PC-3 (cell line): ENCODE measurements at regions of chr19 and their contacts with region 1.

Region 1: GRCh38 chr19:54137086-54137921 is at the start of gene CNOT3:
- DNase-seq: peak; percentile 100
- ATAC-seq: peak; percentile 80
- H3K4me3 ChIP-seq: peak within 1 kb of the TSS; percentile 86
- H3K27ac ChIP-seq: peak within 1 kb of the TSS; percentile 79
- H3K4me1 ChIP-seq: peaks cover 20% of the 10 kb centered on the region; the same call in 1 of the 2 replicates
- H3K27me3 ChIP-seq: no peaks in the 10 kb centered on the region
- CTCF ChIP-seq: no peak
- total RNA-seq, gene CNOT3: 41.1 and 60.2 TPM in 2 replicates

Region 2: DNA sequence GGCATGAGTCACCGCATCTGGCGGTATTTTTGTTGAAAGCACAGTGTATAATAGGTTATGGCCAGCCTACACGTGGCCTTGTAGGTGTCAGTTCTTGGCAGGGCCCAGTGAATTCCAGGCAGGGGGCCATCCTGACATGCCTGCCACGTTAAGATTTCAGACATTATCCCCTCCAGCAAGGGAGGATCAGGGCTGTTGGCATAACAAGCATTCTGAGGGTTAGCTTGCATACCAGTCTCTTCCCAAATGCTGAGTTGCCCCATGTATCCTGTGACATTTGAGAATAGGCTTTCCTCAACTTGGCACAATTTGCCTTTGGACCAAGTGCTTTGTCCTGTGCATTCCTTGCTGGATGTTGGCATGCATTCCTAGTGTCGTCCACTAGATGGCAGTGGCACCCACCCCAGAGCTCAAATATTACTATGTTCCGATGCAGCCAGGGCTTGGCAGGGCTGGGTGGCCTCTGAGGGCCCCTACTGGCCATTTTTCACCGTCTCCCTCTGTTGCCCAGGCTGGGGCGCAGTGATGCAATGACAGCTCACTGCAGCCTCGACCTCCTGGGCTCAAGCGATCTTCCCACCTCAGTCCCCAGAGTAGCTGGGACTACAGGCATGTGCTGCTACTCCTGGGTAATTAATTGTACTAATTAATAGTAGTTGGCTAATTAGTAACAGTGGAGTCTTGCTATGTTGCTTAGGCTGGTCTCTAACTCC is 344.4 kb before region 1 on chr19:
- CTCF ChIA-PET with region 1: interaction called, 10 read pairs
- POLR2A ChIA-PET with region 1: no interaction called
- intact Hi-C with region 1: no loop called
- DNase-seq: peak; percentile 96
- ATAC-seq: peak; percentile 100
- H3K4me3 ChIP-seq: no peak overlapping the region
- H3K27ac ChIP-seq: no peak overlapping the region
- H3K4me1 ChIP-seq: no peaks in the 10 kb centered on the region
- H3K27me3 ChIP-seq: no peaks in the 10 kb centered on the region
- CTCF ChIP-seq: peak; percentile 99

Region 3: DNA sequence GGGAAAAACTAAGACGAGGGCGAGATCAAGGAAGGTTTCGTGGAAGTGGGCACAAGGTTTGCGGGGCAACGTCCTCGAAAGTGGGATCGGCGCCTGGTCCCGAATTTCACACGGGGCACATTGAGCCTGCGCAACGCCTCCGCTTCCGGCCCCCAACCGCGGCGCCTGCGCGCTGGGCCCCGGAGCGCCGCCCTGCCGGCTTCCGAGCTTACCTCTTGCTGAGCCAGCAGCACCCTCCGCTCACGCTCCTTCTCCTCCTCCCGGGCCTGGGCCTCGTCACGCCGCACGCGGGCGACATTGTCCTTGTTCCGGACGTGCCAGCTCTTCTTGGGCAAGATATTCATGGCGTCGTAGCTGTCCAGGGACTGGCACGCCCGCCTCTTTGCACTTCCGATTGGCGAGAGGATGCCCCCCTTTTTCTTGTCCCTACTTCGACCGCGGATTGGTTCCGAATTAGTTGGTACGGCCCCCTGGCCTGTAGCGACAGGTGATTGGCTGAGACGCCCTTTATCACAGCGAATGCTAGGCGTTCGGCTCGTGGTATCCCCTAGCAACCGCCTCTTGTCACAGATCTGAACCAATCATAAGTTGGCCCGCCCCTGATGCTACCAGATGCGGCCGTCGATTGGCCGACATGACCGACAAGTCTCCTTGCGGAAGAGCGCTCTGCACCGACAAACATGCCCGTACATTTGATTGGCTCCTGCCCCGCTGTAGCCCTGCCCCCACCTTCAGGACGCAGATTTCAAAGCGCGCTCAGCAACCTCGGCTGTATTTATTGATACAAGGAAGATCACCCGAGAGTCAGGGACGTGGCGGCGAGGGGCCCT is 22.3 kb after region 1 on chr19 and contains the start of gene LENG1:
- CTCF ChIA-PET with region 1: interaction called, 10 read pairs
- POLR2A ChIA-PET with region 1: interaction called, 5 read pairs
- intact Hi-C with region 1: loop called (anchors 1 kb)
- DNase-seq: peak; percentile 100
- ATAC-seq: peak; percentile 81
- H3K4me3 ChIP-seq: peak within 1 kb of the TSS; percentile 71
- H3K27ac ChIP-seq: peak within 1 kb of the TSS; percentile 72
- H3K4me1 ChIP-seq: peaks cover 38% of the 10 kb centered on the region
- H3K27me3 ChIP-seq: no peaks in the 10 kb centered on the region
- CTCF ChIP-seq: peak; percentile 34; the same call in 1 of the 2 replicates
- total RNA-seq, gene LENG1: 13.6 and 18.8 TPM in 2 replicates

Region 4: GRCh38 chr19:54189735-54190502 is 52.6 kb after region 1 on chr19:
- CTCF ChIA-PET with region 1: interaction called, 11 read pairs
- POLR2A ChIA-PET with region 1: interaction called, 22 read pairs
- intact Hi-C with region 1: loop called (anchors 1 kb)
- DNase-seq: peak; percentile 100
- ATAC-seq: peak; percentile 58
- H3K4me3 ChIP-seq: peak overlapping the region; percentile 74
- H3K27ac ChIP-seq: peak overlapping the region; percentile 89
- H3K4me1 ChIP-seq: peaks cover 19% of the 10 kb centered on the region
- H3K27me3 ChIP-seq: no peaks in the 10 kb centered on the region
- CTCF ChIP-seq: no peak

Region 5: DNA sequence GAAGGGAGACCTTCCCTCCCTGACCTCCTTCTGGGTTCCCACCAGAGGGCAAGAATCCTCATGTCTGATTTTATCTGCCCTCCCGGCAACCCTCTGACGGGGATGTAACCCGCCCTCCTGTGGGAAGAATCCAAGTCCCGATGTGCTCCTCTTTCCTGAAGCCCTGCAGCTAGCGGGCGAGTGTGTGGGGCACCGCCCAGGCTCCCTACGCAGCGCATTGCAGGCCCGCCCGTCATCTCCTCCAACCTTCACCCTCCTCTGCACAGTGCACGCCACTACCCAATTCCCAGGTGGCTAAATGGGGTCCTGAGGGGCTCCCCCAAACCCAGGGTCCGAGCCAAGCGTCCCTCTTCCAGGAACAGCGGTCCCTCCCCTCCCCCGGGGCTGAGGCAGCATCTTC is 220.1 kb after region 1 on chr19:
- CTCF ChIA-PET with region 1: no interaction called
- POLR2A ChIA-PET with region 1: no interaction called
- intact Hi-C with region 1: no loop called
- DNase-seq: no peak
- ATAC-seq: no peak
- H3K4me3 ChIP-seq: no peak overlapping the region
- H3K27ac ChIP-seq: no peak overlapping the region
- H3K4me1 ChIP-seq: no peaks in the 10 kb centered on the region
- H3K27me3 ChIP-seq: peaks cover 14% of the 10 kb centered on the region
- CTCF ChIP-seq: no peak

Region 6: GRCh38 chr19:54430306-54431254 is 293.3 kb after region 1 on chr19:
- CTCF ChIA-PET with region 1: interaction called, 11 read pairs
- POLR2A ChIA-PET with region 1: no interaction called
- intact Hi-C with region 1: no loop called
- DNase-seq: peak; percentile 74
- ATAC-seq: peak; percentile 55
- H3K4me3 ChIP-seq: peak overlapping the region; percentile 66
- H3K27ac ChIP-seq: peak overlapping the region; percentile 89
- H3K4me1 ChIP-seq: peaks cover 34% of the 10 kb centered on the region
- H3K27me3 ChIP-seq: no peaks in the 10 kb centered on the region
- CTCF ChIP-seq: peak; percentile 53